ENCODE measurements at regions of chr6 and their contacts with region 1.

Region 1: GRCh38 chr6:34964564-34964963 is 75.5 kb downstream of the ANKS1A start:
- DNase-seq: peak in 1 of 2 donors; percentile 61
- ATAC-seq: peak in 7 of 8 donors; percentile 49 to 68 (median 62)
- H3K4me3 ChIP-seq: no peak overlapping the region
- H3K27ac ChIP-seq: peak overlapping the region in 9 of 10 donors; percentile 9 to 73 (median 48)
- H3K4me1 ChIP-seq: peaks cover 0 to 68% (median 36%) of the 10 kb centered on the region in 9 donors
- H3K27me3 ChIP-seq: no peaks in the 10 kb centered on the region
- CTCF ChIP-seq: no peak

Region 2: DNA sequence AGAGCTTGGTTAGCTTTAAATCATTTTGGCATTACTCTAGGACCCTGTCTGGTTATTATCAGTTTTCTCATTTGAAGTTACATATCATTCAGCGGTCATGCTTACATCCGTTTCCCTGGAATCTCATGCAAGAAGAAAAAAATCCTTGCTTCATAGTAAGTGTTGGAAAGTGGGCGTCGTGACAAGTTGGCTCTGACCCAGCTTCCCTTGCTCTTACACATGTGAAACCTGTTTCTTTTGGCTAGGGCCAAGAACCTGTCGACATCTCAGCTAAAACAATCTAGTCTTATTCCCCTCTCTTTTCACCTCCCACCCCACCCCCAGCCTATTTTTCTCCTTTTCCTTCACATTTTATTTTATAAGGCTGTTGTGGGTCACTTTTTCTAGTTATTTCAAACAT is 30.0 kb before region 1 on chr6:
- intact Hi-C with region 1: loop called in 1 of 10 experiments (anchors 2 kb)
- DNase-seq: peak; percentile 86 to 89
- ATAC-seq: peak; percentile 77 to 90 (median 80)
- H3K4me3 ChIP-seq: no peak overlapping the region
- H3K27ac ChIP-seq: peak overlapping the region in 7 of 10 donors; percentile 0 to 48 (median 26)
- H3K4me1 ChIP-seq: peaks cover 8 to 57% (median 48%) of the 10 kb centered on the region in 9 donors
- H3K27me3 ChIP-seq: no peaks in the 10 kb centered on the region
- CTCF ChIP-seq: no peak

Measured in heart right ventricle (tissue), 16 donors.